HCT116 (cell line): ENCODE measurements at regions of chr7 and their contacts with region 1.

Region 1: GRCh38 chr7:128209229-128210035 is 31.6 kb upstream of the LEP start:
- DNase-seq: peak; percentile 63
- ATAC-seq: peak; percentile 74
- H3K4me3 ChIP-seq: no peak overlapping the region
- H3K27ac ChIP-seq: no peak overlapping the region
- H3K4me1 ChIP-seq: no peaks in the 10 kb centered on the region
- H3K27me3 ChIP-seq: no peaks in the 10 kb centered on the region; the same call in 1 of the 2 replicates
- CTCF ChIP-seq: peak; percentile 98 to 99 (median 98)
- POLR2A ChIP-seq: no peak
- RAD21 ChIP-seq: peak; percentile 100

Region 2: GRCh38 chr7:126803060-126803665 is 1406.3 kb before region 1 on chr7:
- CTCF ChIA-PET with region 1: no interaction called
- POLR2A ChIA-PET with region 1: no interaction called
- RAD21 ChIA-PET with region 1: no interaction called
- intact Hi-C with region 1: loop called (anchors 5 kb)
- DNase-seq: peak; percentile 68
- ATAC-seq: peak; percentile 98
- H3K4me3 ChIP-seq: no peak overlapping the region
- H3K27ac ChIP-seq: no peak overlapping the region
- H3K4me1 ChIP-seq: no peaks in the 10 kb centered on the region
- H3K27me3 ChIP-seq: no peaks in the 10 kb centered on the region
- CTCF ChIP-seq: peak; percentile 63 to 80 (median 63); a peak in 5 of 6 replicates
- POLR2A ChIP-seq: no peak
- RAD21 ChIP-seq: peak; percentile 82

Region 3: GRCh38 chr7:127585044-127585953 is 624.1 kb before region 1 on chr7 and contains the start of gene GCC1:
- CTCF ChIA-PET with region 1: interaction called, 14 read pairs
- POLR2A ChIA-PET with region 1: interaction called, 3 read pairs
- RAD21 ChIA-PET with region 1: no interaction called
- intact Hi-C with region 1: no loop called
- DNase-seq: peak; percentile 82
- ATAC-seq: peak; percentile 74
- H3K4me3 ChIP-seq: peak within 1 kb of the TSS; percentile 88 to 94
- H3K27ac ChIP-seq: peak within 1 kb of the TSS; percentile 64
- H3K4me1 ChIP-seq: peaks cover 19 to 41% of the 10 kb centered on the region in 2 experiments; a peak in 3 of 4 replicates
- H3K27me3 ChIP-seq: no peaks in the 10 kb centered on the region
- CTCF ChIP-seq: no peak
- POLR2A ChIP-seq: peak; percentile 62
- RAD21 ChIP-seq: no peak
- total RNA-seq, gene GCC1: 17.9 TPM

Region 4: DNA sequence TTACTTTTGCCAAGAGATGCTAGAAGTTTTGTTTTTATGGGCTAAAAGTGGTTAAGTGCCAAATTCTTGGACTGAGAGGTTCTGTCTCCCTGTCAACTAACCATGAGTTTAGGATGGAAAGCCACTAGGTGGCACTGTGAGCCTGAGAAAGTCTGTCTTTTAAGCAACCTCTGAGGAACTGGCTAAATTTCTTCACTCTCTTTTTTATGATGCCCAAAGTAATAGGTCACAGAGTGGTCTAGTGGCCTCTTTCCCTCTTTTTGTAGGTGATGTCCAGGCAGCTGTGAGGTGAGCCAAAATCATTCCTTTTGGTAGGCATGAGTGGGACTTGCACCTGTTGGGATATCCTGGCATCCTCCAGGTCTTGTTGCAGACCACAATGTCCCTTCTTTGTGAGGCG is 500.6 kb before region 1 on chr7:
- CTCF ChIA-PET with region 1: interaction called, 26 read pairs
- POLR2A ChIA-PET with region 1: no interaction called
- RAD21 ChIA-PET with region 1: interaction called, 7 to 12 read pairs
- intact Hi-C with region 1: loop called (anchors 1 kb)
- DNase-seq: peak; percentile 54
- ATAC-seq: peak; percentile 82
- H3K4me3 ChIP-seq: no peak overlapping the region
- H3K27ac ChIP-seq: no peak overlapping the region
- H3K4me1 ChIP-seq: peaks cover 0 to 4% of the 10 kb centered on the region in 2 experiments; a peak in 1 of 4 replicates
- H3K27me3 ChIP-seq: no peaks in the 10 kb centered on the region
- CTCF ChIP-seq: peak; percentile 56 to 69 (median 67); a peak in 5 of 6 replicates
- POLR2A ChIP-seq: no peak
- RAD21 ChIP-seq: peak; percentile 71

Region 5: GRCh38 chr7:128135515-128136214 is 73.8 kb before region 1 on chr7:
- CTCF ChIA-PET with region 1: interaction called, 41 read pairs
- POLR2A ChIA-PET with region 1: interaction called, 8 read pairs
- RAD21 ChIA-PET with region 1: interaction called, 16 to 21 read pairs
- intact Hi-C with region 1: loop called (anchors 1 kb)
- DNase-seq: peak; percentile 40
- ATAC-seq: peak; percentile 93
- H3K4me3 ChIP-seq: peak overlapping the region; percentile 39 to 56
- H3K27ac ChIP-seq: no peak overlapping the region; the same call in 1 of the 2 replicates
- H3K4me1 ChIP-seq: peaks cover 0 to 10% of the 10 kb centered on the region in 2 experiments; a peak in 2 of 4 replicates
- H3K27me3 ChIP-seq: peaks cover 9% of the 10 kb centered on the region; the same call in 1 of the 2 replicates
- CTCF ChIP-seq: peak; percentile 52 to 77 (median 65)
- POLR2A ChIP-seq: no peak
- RAD21 ChIP-seq: peak; percentile 62